B cell (primary cell): ENCODE measurements at regions of chr12 and their contacts with region 1.

Region 1: GRCh38 chr12:76037130-76038103 is 5.8 kb upstream of the PHLDA1 start:
- DNase-seq: peak; percentile 76
- ATAC-seq: peak; percentile 71
- H3K4me3 ChIP-seq: no peak overlapping the region
- H3K4me3 Mint-ChIP-seq: no peak overlapping the region
- H3K27ac ChIP-seq: no peak overlapping the region
- H3K27ac Mint-ChIP-seq: no peak overlapping the region
- H3K4me1 ChIP-seq: peaks cover 3 to 4% of the 10 kb centered on the region in 2 donors
- H3K4me1 Mint-ChIP-seq: peaks cover 9% of the 10 kb centered on the region
- H3K27me3 ChIP-seq: no peaks in the 10 kb centered on the region
- H3K27me3 Mint-ChIP-seq: no peaks in the 10 kb centered on the region
- CTCF ChIP-seq: peak; percentile 85

Region 2: DNA sequence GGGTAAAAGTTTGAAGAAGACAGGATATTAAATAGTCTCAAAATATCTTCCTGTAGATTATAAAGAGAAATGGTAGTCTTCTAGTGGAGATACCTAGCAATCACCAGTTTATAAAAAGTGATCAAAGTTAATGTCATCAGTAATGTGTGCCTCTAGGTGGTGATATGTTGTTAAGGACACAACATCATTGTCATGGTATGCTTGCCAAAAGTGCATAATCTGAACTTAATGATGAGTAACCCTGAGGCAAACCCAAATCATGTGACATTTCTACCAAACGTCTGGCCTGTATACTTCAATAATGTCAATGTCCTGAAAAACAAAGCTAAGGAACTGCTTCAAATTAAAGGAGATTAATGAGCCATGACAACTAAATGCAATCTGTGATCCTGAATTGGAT is 220.5 kb before region 1 on chr12:
- CTCF ChIA-PET with region 1: interaction called, 4 read pairs
- POLR2A ChIA-PET with region 1: no interaction called
- intact Hi-C with region 1: loop called (anchors 2 kb)
- DNase-seq: no peak
- ATAC-seq: peak; percentile 31
- H3K4me3 ChIP-seq: no peak overlapping the region
- H3K4me3 Mint-ChIP-seq: no peak overlapping the region
- H3K27ac ChIP-seq: no peak overlapping the region
- H3K27ac Mint-ChIP-seq: no peak overlapping the region
- H3K4me1 ChIP-seq: peaks cover 11 to 12% of the 10 kb centered on the region in 2 donors
- H3K4me1 Mint-ChIP-seq: peaks cover 17% of the 10 kb centered on the region
- H3K27me3 ChIP-seq: no peaks in the 10 kb centered on the region
- H3K27me3 Mint-ChIP-seq: peaks cover 5% of the 10 kb centered on the region
- CTCF ChIP-seq: no peak

Region 3: DNA sequence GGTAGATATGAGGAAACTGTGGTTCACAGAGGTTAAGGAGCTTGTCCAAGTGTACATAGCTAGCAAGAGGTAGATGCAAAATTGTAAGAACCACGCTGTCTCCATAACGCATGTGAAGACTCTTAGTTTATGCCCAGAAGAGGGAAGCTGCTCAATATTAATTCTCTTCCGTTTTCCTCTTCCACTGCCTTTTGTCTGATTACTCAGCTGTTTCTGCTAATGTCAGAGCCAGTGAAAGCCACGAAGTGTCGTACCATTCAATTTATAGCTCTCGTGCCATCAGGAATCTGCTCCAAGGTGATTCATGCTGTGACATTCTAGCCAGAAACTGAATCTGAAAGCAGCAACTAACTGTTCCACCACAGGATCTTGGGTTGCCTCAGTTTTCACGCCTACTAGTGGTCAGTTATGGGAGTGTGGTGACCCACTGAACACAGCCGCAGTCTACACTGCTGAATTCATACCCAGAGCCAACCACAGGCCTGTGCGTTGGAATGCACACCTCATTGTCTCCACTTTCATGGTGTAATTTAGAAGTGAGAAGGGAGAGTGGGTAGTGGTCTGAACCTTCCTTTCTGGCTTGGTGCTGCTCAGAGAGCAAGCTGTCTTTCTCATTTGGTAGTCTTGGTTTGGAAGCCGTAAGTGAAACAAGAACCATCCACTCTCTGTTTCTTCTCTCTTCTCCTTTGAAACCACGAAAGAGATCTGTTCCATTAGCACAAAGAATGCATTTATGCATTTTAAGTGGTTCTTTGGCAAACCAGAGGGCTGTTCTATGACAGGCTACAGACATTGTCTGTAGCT is 121.3 kb after region 1 on chr12:
- CTCF ChIA-PET with region 1: no interaction called
- POLR2A ChIA-PET with region 1: no interaction called
- intact Hi-C with region 1: no loop called
- DNase-seq: peak; percentile 82
- ATAC-seq: peak; percentile 99
- H3K4me3 ChIP-seq: peak overlapping the region; percentile 5 to 68 (median 45)
- H3K4me3 Mint-ChIP-seq: peak overlapping the region; percentile 91
- H3K27ac ChIP-seq: peak overlapping the region; percentile 14 to 76
- H3K27ac Mint-ChIP-seq: peak overlapping the region; percentile 94
- H3K4me1 ChIP-seq: peaks cover 9 to 16% of the 10 kb centered on the region in 2 donors
- H3K4me1 Mint-ChIP-seq: peaks cover 25% of the 10 kb centered on the region
- H3K27me3 ChIP-seq: no peaks in the 10 kb centered on the region
- H3K27me3 Mint-ChIP-seq: no peaks in the 10 kb centered on the region
- CTCF ChIP-seq: peak; percentile 83